Ascending aorta (tissue), 2 donors: ENCODE measurements at regions of chr19 and their contacts with region 1.

Region 1: GRCh38 chr19:8513687-8514504 is at the start of gene ZNF414:
- DNase-seq: peak; percentile 77 to 98
- H3K4me3 ChIP-seq: peak within 1 kb of the TSS; percentile 70 to 90
- H3K27ac ChIP-seq: peak within 1 kb of the TSS; percentile 96 to 98
- H3K4me1 ChIP-seq: peaks cover 6 to 7% of the 10 kb centered on the region in 2 donors
- H3K27me3 ChIP-seq: no peaks in the 10 kb centered on the region
- CTCF ChIP-seq: no peak
- total RNA-seq, gene ZNF414: 189 TPM

Region 2: DNA sequence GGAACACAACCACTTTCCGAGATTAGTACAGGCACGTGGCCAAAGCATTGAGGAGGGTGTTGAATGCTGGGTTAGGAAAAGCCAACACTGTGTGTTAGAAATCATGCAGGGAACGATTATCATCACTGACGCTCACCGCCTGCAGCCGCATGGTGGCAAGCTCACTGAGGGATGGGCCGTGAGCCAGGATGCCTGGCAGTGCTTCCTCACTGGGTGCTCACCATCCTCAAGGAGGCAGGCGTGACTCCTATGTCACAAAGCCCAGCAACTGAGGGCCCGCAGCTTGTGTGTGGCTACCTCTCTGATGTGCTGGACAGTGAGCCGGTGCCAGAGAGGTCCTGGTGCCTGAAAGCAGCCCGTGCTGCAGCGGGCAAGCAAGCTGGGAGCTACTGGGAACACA is 540.0 kb before region 1 on chr19:
- intact Hi-C with region 1: no loop called
- DNase-seq: no peak
- H3K4me3 ChIP-seq: no peak overlapping the region
- H3K27ac ChIP-seq: no peak overlapping the region
- H3K4me1 ChIP-seq: peaks cover 0 to 3% of the 10 kb centered on the region in 2 donors
- H3K27me3 ChIP-seq: no peaks in the 10 kb centered on the region
- CTCF ChIP-seq: no peak

Region 3: DNA sequence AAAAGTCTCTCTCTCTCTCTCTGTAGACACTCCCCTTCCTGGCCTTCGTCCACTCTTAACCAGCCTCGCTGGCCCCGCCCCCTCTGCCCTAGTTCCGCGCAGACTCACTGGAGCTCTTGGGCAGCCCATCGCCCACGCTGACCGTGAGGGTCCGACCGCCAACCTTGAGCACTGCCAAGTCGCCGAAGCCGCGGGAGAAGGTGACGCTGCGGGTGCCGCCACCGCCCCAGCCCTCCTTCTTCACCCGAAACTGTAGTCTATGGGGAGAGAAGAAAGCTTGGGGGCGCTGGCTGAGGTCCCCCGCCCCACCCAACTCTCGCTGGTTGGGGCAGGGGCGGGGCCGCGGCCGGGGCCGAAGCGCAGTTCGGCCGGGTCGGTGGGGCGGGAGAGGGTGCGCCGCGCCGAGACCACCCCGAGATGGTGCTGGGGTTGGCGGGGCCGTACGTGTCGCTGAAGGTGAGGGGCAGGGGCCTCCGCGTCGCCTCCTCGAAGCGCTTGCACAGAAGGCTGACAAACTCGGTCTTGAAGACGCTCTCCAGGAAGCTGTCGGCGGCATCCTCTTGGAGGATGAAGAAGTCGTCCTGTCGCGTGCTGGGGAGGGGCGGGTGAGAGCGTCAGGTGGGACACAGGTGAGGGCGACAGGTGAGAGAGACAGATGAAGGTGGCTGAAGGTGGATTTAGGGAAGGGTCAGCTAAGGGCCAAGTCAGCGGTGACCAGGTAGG is 12.6 kb after region 1 on chr19:
- intact Hi-C with region 1: loop called (anchors 1 kb)
- DNase-seq: peak; percentile 61 to 92
- H3K4me3 ChIP-seq: peak overlapping the region; percentile 76 to 78
- H3K27ac ChIP-seq: peak overlapping the region; percentile 74 to 82
- H3K4me1 ChIP-seq: no peaks in the 10 kb centered on the region
- H3K27me3 ChIP-seq: no peaks in the 10 kb centered on the region
- CTCF ChIP-seq: no peak